ENCODE measurements at regions of chr17 and their contacts with region 1.

Region 1: GRCh38 chr17:78186692-78187595 is at the starts of genes AFMID and TK1:
- DNase-seq: peak; percentile 99 to 100
- ATAC-seq: peak; percentile 93 to 94
- H3K4me3 ChIP-seq: peak within 1 kb of the TSS; percentile 72
- H3K27ac ChIP-seq: peak within 1 kb of the TSS; percentile 82 to 88
- H3K4me1 ChIP-seq: peaks cover 32% of the 10 kb centered on the region
- CTCF ChIP-seq: peak; percentile 89
- EP300 ChIP-seq: no peak
- POLR2A ChIP-seq: peak; percentile 95
- RAD21 ChIP-seq: peak in 1 of 2 experiments; percentile 29; a peak in 1 of 5 replicates
- polyA plus RNA-seq, gene AFMID: 33.4 and 59.8 TPM in 2 replicates
- polyA plus RNA-seq, gene TK1: 86.1 and 90.9 TPM in 2 replicates

Region 2: GRCh38 chr17:78133971-78134898 is 52.7 kb before region 1 on chr17:
- CTCF ChIA-PET with region 1: interaction called, 14 read pairs
- POLR2A ChIA-PET with region 1: no interaction called
- DNase-seq: peak; percentile 79 to 80
- ATAC-seq: peak; percentile 51 to 72
- H3K4me3 ChIP-seq: no peak overlapping the region
- H3K27ac ChIP-seq: no peak overlapping the region
- H3K4me1 ChIP-seq: 0 out of 3 replicates have a peak, but pooled peaks cover 2% of the 10 kb centered on the region
- CTCF ChIP-seq: peak; percentile 65
- EP300 ChIP-seq: no peak
- POLR2A ChIP-seq: no peak
- RAD21 ChIP-seq: peak; percentile 51 to 69

Region 3: DNA sequence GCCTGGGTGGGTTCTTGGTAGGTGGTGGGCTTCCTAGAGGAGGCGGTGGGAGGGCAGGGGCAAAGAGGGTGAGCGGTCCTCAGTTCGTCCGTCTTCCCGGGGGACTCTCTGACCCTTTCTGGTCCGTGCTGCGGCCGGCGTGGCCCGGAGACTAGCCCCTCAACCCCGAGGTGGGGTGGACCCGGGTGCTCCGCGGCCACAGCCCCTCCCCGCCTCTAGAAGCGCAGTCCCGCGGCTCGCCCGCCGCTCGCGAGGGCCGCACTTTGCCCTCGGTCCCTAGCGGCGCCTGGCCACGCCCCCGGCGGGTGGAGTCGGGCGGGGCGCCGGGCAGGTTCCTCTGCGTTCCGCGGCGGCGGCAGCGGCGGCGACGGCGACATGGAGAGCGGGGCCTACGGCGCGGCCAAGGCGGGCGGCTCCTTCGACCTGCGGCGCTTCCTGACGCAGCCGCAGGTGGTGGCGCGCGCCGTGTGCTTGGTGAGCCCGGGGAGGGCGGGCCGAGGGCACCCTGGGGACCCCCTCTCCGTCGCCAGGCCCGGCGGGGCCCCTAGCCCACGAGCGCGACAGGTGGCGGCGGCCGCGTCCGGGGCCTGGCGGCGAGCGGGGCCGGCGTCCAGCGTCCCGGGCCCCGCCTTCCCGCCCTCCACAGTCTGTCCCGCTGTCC is 18.6 kb before region 1 on chr17 and contains the start of gene SYNGR2:
- CTCF ChIA-PET with region 1: interaction called, 105 read pairs
- POLR2A ChIA-PET with region 1: interaction called, 4 read pairs
- DNase-seq: peak; percentile 83 to 97
- ATAC-seq: peak; percentile 64 to 66
- H3K4me3 ChIP-seq: peak within 1 kb of the TSS; percentile 89
- H3K27ac ChIP-seq: peak within 1 kb of the TSS; percentile 86 to 96
- H3K4me1 ChIP-seq: peaks cover 26% of the 10 kb centered on the region
- CTCF ChIP-seq: no peak
- EP300 ChIP-seq: no peak
- POLR2A ChIP-seq: peak; percentile 76
- RAD21 ChIP-seq: no peak
- polyA plus RNA-seq, gene SYNGR2: 113 and 133 TPM in 2 replicates

Region 4: GRCh38 chr17:78197147-78197832 is 10.3 kb after region 1 on chr17:
- CTCF ChIA-PET with region 1: interaction called, 86 read pairs
- POLR2A ChIA-PET with region 1: interaction called, 4 read pairs
- DNase-seq: no peak
- ATAC-seq: peak in 1 of 2 experiments; percentile 52; a peak in 2 of 6 replicates
- H3K4me3 ChIP-seq: no peak overlapping the region
- H3K27ac ChIP-seq: no peak overlapping the region
- H3K4me1 ChIP-seq: no peaks in the 10 kb centered on the region
- CTCF ChIP-seq: no peak
- EP300 ChIP-seq: no peak
- POLR2A ChIP-seq: no peak
- RAD21 ChIP-seq: no peak

Region 5: DNA sequence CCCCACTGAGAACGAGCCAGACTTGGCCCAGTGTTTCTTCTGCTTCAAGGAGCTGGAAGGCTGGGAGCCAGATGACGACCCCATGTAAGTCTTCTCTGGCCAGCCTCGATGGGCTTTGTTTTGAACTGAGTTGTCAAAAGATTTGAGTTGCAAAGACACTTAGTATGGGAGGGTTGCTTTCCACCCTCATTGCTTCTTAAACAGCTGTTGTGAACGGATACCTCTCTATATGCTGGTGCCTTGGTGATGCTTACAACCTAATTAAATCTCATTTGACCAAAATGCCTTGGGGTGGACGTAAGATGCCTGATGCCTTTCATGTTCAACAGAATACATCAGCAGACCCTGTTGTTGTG is 27.7 kb after region 1 on chr17:
- CTCF ChIA-PET with region 1: interaction called, 17 read pairs
- POLR2A ChIA-PET with region 1: no interaction called
- DNase-seq: no peak
- ATAC-seq: no peak
- H3K4me3 ChIP-seq: peak overlapping the region; percentile 83
- H3K27ac ChIP-seq: peak overlapping the region; percentile 86 to 93
- H3K4me1 ChIP-seq: peaks cover 9% of the 10 kb centered on the region
- CTCF ChIP-seq: no peak
- EP300 ChIP-seq: no peak
- POLR2A ChIP-seq: no peak
- RAD21 ChIP-seq: no peak

Region 6: GRCh38 chr17:78278139-78279127 is 91.5 kb after region 1 on chr17:
- CTCF ChIA-PET with region 1: no interaction called
- POLR2A ChIA-PET with region 1: no interaction called
- DNase-seq: no peak
- ATAC-seq: peak; percentile 37 to 42; a peak in 4 of 6 replicates
- H3K4me3 ChIP-seq: no peak overlapping the region
- H3K27ac ChIP-seq: peak overlapping the region in 1 of 2 experiments; percentile 26; a peak in 2 of 6 replicates
- H3K4me1 ChIP-seq: peaks cover 4% of the 10 kb centered on the region; the same call in 1 of the 3 replicates
- CTCF ChIP-seq: no peak
- EP300 ChIP-seq: no peak
- POLR2A ChIP-seq: no peak
- RAD21 ChIP-seq: no peak

Measured in A549 (cell line).